Sigmoid colon (tissue), 7 donors: ENCODE measurements at regions of chr14 and their contacts with region 1.

Region 1: GRCh38 chr14:51283402-51284085 is 43.5 kb downstream of the TMX1 start:
- DNase-seq: no peak
- H3K4me3 ChIP-seq: no peak overlapping the region
- H3K27ac ChIP-seq: no peak overlapping the region
- H3K4me1 ChIP-seq: peaks cover 0 to 11% (median 0%) of the 10 kb centered on the region in 4 donors
- H3K27me3 ChIP-seq: no peaks in the 10 kb centered on the region
- CTCF ChIP-seq: peak; percentile 79 to 84 (median 82)
- EP300 ChIP-seq: no peak
- POLR2A ChIP-seq: no peak

Region 2: DNA sequence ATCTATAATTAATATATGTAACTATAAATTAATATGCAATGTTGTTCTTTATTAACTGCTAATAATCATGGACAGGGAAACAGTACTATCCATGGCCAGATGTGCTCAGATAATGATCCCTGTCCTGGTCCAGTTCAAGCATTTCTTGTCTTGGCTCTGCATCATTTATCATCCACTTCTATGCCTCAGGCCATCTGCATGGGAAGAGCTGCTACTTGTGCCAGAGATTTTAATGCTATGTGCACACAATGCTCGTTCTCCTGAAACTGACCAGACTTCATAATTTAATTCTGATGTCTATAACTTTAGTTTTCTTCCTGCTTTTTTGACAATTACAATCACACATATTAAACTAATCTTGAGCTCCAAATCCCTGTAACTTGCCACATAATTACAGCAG is 54.7 kb before region 1 on chr14:
- intact Hi-C with region 1: no loop called
- DNase-seq: no peak
- H3K4me3 ChIP-seq: no peak overlapping the region
- H3K27ac ChIP-seq: no peak overlapping the region
- H3K4me1 ChIP-seq: peaks cover 0 to 9% (median 0%) of the 10 kb centered on the region in 4 donors
- H3K27me3 ChIP-seq: no peaks in the 10 kb centered on the region
- CTCF ChIP-seq: no peak
- EP300 ChIP-seq: no peak
- POLR2A ChIP-seq: no peak

Region 3: GRCh38 chr14:51547260-51547659 is 263.7 kb after region 1 on chr14:
- intact Hi-C with region 1: loop called (anchors 2 kb)
- DNase-seq: peak; percentile 83
- H3K4me3 ChIP-seq: no peak overlapping the region
- H3K27ac ChIP-seq: peak overlapping the region; percentile 30 to 77 (median 74)
- H3K4me1 ChIP-seq: peaks cover 0 to 33% (median 24%) of the 10 kb centered on the region in 4 donors
- H3K27me3 ChIP-seq: no peaks in the 10 kb centered on the region
- CTCF ChIP-seq: no peak
- EP300 ChIP-seq: peak in 1 of 4 donors; percentile 71
- POLR2A ChIP-seq: no peak

Region 4: GRCh38 chr14:51780006-51780692 is 496.6 kb after region 1 on chr14:
- intact Hi-C with region 1: loop called (anchors 2 kb)
- DNase-seq: peak; percentile 87
- H3K4me3 ChIP-seq: no peak overlapping the region
- H3K27ac ChIP-seq: no peak overlapping the region
- H3K4me1 ChIP-seq: peaks cover 0 to 21% (median 11%) of the 10 kb centered on the region in 4 donors
- H3K27me3 ChIP-seq: no peaks in the 10 kb centered on the region
- CTCF ChIP-seq: peak; percentile 59 to 80 (median 75)
- EP300 ChIP-seq: no peak
- POLR2A ChIP-seq: no peak

Region 5: GRCh38 chr14:51989293-51990234 is 706.0 kb after region 1 on chr14 and contains the start of gene RTRAF:
- intact Hi-C with region 1: loop called (anchors 5 kb)
- DNase-seq: peak; percentile 97
- H3K4me3 ChIP-seq: peak within 1 kb of the TSS; percentile 90 to 98 (median 94)
- H3K27ac ChIP-seq: peak within 1 kb of the TSS; percentile 91 to 94 (median 92)
- H3K4me1 ChIP-seq: peaks cover 0 to 39% (median 19%) of the 10 kb centered on the region in 4 donors
- H3K27me3 ChIP-seq: no peaks in the 10 kb centered on the region
- CTCF ChIP-seq: no peak
- EP300 ChIP-seq: no peak
- POLR2A ChIP-seq: peak; percentile 80 to 82
- total RNA-seq, gene RTRAF: 33.5 to 76.0 (median 53.7) TPM